Activated naive CD4-positive, alpha-beta T cell treated with anti-CD3 and anti-CD28 coated beads for 36 hours (primary cell): ENCODE measurements at regions of chr6 and their contacts with region 1.

Region 1: DNA sequence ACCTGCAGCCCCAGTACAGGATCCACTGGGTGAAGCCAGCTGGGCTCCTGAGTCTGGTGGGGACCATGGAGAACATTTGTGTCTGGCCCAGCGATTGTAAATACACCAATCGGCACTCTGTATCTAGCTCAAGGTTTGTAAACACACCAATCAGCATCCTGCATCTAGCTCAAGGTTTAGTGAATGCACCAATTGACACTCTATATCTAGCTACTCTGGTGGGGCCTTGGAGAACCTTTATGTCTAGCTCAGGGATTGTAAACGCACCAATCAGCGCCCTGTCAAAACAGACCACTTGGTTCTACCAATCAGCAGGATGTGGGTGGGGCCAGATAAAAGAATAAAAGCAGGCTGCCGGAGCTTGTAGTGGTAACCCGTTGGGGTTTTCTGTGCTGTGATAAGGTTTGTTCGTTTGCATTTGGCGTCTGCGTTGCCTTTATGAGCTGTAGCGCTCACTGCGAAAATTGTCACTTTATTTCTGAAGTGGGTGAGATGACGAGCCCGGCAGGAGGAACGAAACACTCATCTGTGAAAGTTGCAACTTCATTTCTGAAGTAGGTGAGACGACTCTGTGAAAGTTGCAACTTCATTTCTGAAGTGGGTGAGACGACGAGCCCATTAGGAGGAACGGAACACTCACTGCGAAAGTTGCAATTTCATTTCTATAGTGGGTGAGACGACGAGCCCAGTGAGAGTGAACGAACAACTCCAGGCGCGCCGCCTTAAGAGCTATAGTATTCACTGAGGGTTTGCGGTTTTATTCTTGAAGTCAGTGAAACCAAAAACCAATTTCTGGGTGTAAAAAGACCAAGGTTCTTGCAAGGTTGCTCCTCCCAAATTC is 31.1 kb downstream of the SERPINB6 start:
- DNase-seq: peak; percentile 95
- H3K4me3 Mint-ChIP-seq: peak overlapping the region; percentile 2
- H3K27ac Mint-ChIP-seq: peak overlapping the region; percentile 97
- H3K4me1 Mint-ChIP-seq: peaks cover 69% of the 10 kb centered on the region
- H3K27me3 Mint-ChIP-seq: no peaks in the 10 kb centered on the region

Region 2: DNA sequence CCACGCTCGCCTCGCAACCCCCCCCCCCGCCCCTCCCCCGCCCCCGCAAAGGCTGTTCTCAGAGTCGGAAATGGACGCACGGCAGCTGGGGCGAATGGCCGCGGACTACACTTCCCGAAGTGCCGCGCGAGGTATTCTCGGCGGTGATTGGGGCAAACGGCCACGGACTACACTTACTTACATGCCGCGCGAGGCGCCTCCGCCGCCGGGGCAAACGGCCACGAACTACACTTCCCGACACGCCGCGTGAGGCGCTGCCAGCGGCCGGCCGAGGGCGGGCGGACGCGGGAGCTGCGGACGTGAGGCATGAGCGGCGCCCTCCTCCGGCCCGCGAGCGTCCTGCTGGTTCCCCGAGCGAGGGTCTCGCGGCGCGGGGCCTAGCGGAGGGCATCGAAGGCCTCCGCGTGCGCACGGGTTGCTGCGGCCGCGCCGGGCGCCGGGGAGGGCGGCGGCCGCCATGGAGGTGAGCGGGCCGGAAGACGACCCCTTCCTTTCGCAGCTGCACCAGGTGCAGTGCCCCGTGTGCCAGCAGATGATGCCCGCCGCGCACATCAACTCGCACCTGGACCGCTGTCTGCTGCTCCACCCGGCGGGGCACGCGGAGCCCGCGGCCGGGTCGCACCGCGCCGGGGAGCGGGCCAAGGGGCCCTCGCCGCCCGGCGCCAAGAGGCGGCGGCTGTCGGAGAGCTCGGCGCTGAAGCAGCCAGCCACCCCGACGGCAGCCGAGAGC is 174.9 kb before region 1 on chr6 and contains the start of gene WRNIP1:
- CTCF ChIA-PET with region 1: interaction called, 5 read pairs
- intact Hi-C with region 1: loop called (anchors 1 kb)
- DNase-seq: peak; percentile 97
- H3K4me3 Mint-ChIP-seq: peak within 1 kb of the TSS; percentile 93
- H3K27ac Mint-ChIP-seq: peak within 1 kb of the TSS; percentile 96
- H3K4me1 Mint-ChIP-seq: peaks cover 45% of the 10 kb centered on the region
- H3K27me3 Mint-ChIP-seq: no peaks in the 10 kb centered on the region
- total RNA-seq, gene WRNIP1: 19.2 to 21.7 TPM

Region 3: GRCh38 chr6:2848851-2849250 is 91.4 kb before region 1 on chr6:
- CTCF ChIA-PET with region 1: interaction called, 177 read pairs
- intact Hi-C with region 1: loop called (anchors 1 kb)
- DNase-seq: peak; percentile 89
- H3K4me3 Mint-ChIP-seq: peak overlapping the region; percentile 63
- H3K27ac Mint-ChIP-seq: peak overlapping the region; percentile 84
- H3K4me1 Mint-ChIP-seq: peaks cover 51% of the 10 kb centered on the region
- H3K27me3 Mint-ChIP-seq: no peaks in the 10 kb centered on the region

Region 4: DNA sequence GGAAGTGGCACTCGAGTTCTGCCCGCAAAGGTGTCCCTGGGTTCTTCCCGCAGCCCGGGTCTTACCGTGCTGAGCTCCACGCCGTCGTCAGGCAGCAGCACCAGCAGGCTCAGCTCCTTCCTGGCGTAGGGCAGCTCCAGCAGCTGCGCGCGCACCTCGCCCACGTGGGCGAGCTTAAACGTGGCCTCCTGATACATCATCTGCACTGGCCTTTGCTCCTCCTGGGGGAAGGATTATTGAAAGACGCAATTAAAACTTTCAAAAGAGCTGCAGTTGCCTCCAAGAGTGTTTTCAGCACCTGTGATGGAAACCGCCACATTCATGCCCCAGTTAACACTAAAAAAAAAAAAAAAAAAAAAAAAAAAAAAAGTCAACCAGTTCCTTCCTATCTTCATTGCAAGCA is 48.5 kb before region 1 on chr6:
- CTCF ChIA-PET with region 1: interaction called, 5 read pairs
- intact Hi-C with region 1: loop called (anchors 1 kb)
- DNase-seq: peak; percentile 85
- H3K4me3 Mint-ChIP-seq: peak overlapping the region; percentile 75
- H3K27ac Mint-ChIP-seq: peak overlapping the region; percentile 88
- H3K4me1 Mint-ChIP-seq: peaks cover 71% of the 10 kb centered on the region
- H3K27me3 Mint-ChIP-seq: no peaks in the 10 kb centered on the region

Region 5: GRCh38 chr6:2988426-2989331 is 48.4 kb after region 1 on chr6:
- CTCF ChIA-PET with region 1: interaction called, 13 read pairs
- intact Hi-C with region 1: loop called (anchors 1 kb)
- DNase-seq: peak; percentile 84
- H3K4me3 Mint-ChIP-seq: peak overlapping the region; percentile 87
- H3K27ac Mint-ChIP-seq: peak overlapping the region; percentile 97
- H3K4me1 Mint-ChIP-seq: peaks cover 12% of the 10 kb centered on the region
- H3K27me3 Mint-ChIP-seq: no peaks in the 10 kb centered on the region

Region 6: GRCh38 chr6:3482869-3483268 is 542.6 kb after region 1 on chr6:
- CTCF ChIA-PET with region 1: no interaction called
- intact Hi-C with region 1: no loop called
- DNase-seq: no peak
- H3K4me3 Mint-ChIP-seq: no peak overlapping the region
- H3K27ac Mint-ChIP-seq: no peak overlapping the region
- H3K4me1 Mint-ChIP-seq: no peaks in the 10 kb centered on the region
- H3K27me3 Mint-ChIP-seq: peaks cover 5% of the 10 kb centered on the region